Sigmoid colon (tissue), 7 donors: ENCODE measurements at regions of chr11 and their contacts with region 1.

Region 1: GRCh38 chr11:126062679-126063506 is at the start of gene CDON:
- DNase-seq: peak; percentile 96
- H3K4me3 ChIP-seq: peak within 1 kb of the TSS; percentile 73 to 94 (median 82)
- H3K27ac ChIP-seq: peak within 1 kb of the TSS; percentile 83 to 95 (median 92)
- H3K4me1 ChIP-seq: peaks cover 0 to 42% (median 32%) of the 10 kb centered on the region in 4 donors
- H3K27me3 ChIP-seq: no peaks in the 10 kb centered on the region
- CTCF ChIP-seq: no peak
- EP300 ChIP-seq: peak in 1 of 4 donors; percentile 15
- POLR2A ChIP-seq: no peak
- total RNA-seq, gene CDON: 48.9 to 88.1 (median 66.3) TPM

Region 2: DNA sequence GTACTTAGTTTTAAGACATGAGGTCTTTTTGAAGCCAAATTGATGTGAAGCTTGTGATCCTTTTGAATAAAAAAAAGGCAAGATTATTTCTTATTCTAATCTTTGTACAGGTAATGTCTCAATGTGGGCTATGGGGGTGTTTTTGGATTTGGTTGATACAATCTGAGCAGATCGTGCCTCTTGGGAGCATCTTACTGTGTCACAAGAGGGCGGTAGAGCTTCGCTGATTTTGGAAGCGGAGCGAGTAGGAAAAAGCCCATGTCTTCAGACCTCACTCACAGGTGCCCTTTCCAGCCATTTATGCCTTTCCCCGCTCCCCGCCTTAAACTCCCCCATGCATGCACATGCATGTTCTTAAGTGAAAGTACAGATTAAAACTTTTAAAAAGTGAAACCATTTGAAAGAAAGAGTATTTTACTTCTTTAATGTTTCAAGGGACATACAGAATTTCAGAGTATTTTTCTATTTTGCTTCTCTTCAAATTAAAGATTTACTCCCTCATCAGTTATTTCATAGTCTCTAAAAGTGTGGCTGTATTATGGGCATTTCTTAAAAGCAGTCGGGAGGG is 139.8 kb before region 1 on chr11:
- intact Hi-C with region 1: loop called (anchors 5 kb)
- DNase-seq: peak; percentile 79
- H3K4me3 ChIP-seq: no peak overlapping the region
- H3K27ac ChIP-seq: no peak overlapping the region
- H3K4me1 ChIP-seq: peaks cover 0 to 9% (median 4%) of the 10 kb centered on the region in 4 donors
- H3K27me3 ChIP-seq: no peaks in the 10 kb centered on the region
- CTCF ChIP-seq: peak; percentile 70 to 82 (median 76)
- EP300 ChIP-seq: no peak
- POLR2A ChIP-seq: no peak

Region 3: GRCh38 chr11:126024123-126024522 is 38.8 kb before region 1 on chr11:
- intact Hi-C with region 1: loop called (anchors 2 kb)
- DNase-seq: peak; percentile 72
- H3K4me3 ChIP-seq: no peak overlapping the region
- H3K27ac ChIP-seq: peak overlapping the region; percentile 61 to 81 (median 79)
- H3K4me1 ChIP-seq: peaks cover 0 to 81% (median 57%) of the 10 kb centered on the region in 4 donors
- H3K27me3 ChIP-seq: no peaks in the 10 kb centered on the region
- CTCF ChIP-seq: no peak
- EP300 ChIP-seq: peak in 2 of 4 donors; percentile 70 to 85
- POLR2A ChIP-seq: no peak

Region 4: GRCh38 chr11:126140932-126141291 is 78.0 kb after region 1 on chr11:
- intact Hi-C with region 1: loop called (anchors 2 kb)
- DNase-seq: peak; percentile 94
- H3K4me3 ChIP-seq: peak overlapping the region in 2 of 4 donors; percentile 5 to 19
- H3K27ac ChIP-seq: peak overlapping the region; percentile 69 to 91 (median 88)
- H3K4me1 ChIP-seq: peaks cover 0 to 66% (median 58%) of the 10 kb centered on the region in 4 donors
- H3K27me3 ChIP-seq: no peaks in the 10 kb centered on the region
- CTCF ChIP-seq: no peak
- EP300 ChIP-seq: peak in 3 of 4 donors; percentile 56 to 69 (median 69)
- POLR2A ChIP-seq: no peak

Region 5: GRCh38 chr11:126194121-126194543 is 131.2 kb after region 1 on chr11:
- intact Hi-C with region 1: loop called (anchors 5 kb)
- DNase-seq: no peak
- H3K4me3 ChIP-seq: no peak overlapping the region
- H3K27ac ChIP-seq: no peak overlapping the region
- H3K4me1 ChIP-seq: peaks cover 0 to 23% (median 16%) of the 10 kb centered on the region in 4 donors
- H3K27me3 ChIP-seq: no peaks in the 10 kb centered on the region
- CTCF ChIP-seq: peak; percentile 56 to 76 (median 67)
- EP300 ChIP-seq: no peak
- POLR2A ChIP-seq: no peak